WTC11 (cell line): ENCODE measurements at regions of chr11 and their contacts with region 1.

Region 1: GRCh38 chr11:6377902-6378639 is 12.2 kb upstream of the SMPD1 start:
- DNase-seq: no peak
- ATAC-seq: no peak
- H3K4me3 Mint-ChIP-seq: no peak overlapping the region
- H3K27ac Mint-ChIP-seq: no peak overlapping the region
- H3K4me1 Mint-ChIP-seq: peaks cover 13% of the 10 kb centered on the region
- H3K27me3 Mint-ChIP-seq: no peaks in the 10 kb centered on the region
- CTCF ChIP-seq: no peak

Region 2: DNA sequence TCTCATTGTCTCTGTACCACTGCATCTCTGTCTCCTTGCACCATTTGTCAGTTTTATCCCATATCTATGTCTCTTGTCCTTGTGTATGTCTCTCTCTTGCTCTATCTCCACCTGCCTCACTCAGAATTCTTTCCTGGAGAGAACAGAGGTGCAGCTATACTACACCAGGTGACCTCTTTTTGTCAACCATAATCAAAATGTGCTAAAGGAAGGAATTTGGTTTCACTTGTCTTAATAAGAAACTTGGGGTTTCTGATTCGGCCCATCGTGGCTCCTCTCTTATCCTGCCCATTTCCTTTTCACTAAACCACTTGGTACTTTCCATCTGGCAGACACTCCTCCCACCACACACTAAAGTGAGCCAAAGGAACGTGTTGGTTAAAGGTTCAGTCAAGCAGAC is 174.7 kb before region 1 on chr11:
- CTCF ChIA-PET with region 1: no interaction called
- POLR2A ChIA-PET with region 1: no interaction called
- DNase-seq: no peak
- ATAC-seq: no peak
- H3K4me3 Mint-ChIP-seq: no peak overlapping the region
- H3K27ac Mint-ChIP-seq: no peak overlapping the region
- H3K4me1 Mint-ChIP-seq: peaks cover 9% of the 10 kb centered on the region
- H3K27me3 Mint-ChIP-seq: no peaks in the 10 kb centered on the region
- CTCF ChIP-seq: no peak

Region 3: DNA sequence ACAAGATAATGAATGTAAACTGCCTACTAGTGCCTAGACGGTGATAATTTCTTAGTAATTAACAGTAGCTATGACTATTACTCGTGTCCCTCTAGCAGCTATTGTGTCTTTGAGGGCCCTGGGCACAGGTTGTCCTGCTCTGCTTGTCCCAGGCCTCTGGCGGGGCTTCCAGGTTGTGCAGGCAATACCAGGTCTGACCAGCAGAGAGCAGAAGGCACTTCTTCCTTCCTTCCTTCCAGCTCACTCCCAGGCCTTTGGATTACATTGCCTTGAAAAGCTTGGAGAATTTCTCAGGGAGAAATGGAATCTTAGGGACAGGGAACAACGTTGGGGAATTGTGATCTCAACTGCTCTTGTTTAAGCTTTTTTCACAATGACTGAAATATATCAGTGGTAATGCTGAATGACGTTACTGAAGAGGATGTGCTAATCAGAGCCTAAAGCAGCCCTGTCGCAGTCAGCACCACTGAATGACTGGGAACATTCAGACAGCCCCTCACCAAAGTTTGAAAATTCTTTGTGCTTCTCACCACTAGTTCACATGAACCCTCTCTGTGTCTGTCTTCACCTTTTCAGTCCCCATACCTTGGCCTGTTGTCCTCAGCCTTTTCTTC is 126.8 kb before region 1 on chr11:
- CTCF ChIA-PET with region 1: interaction called, 11 read pairs
- POLR2A ChIA-PET with region 1: no interaction called
- DNase-seq: peak; percentile 89
- ATAC-seq: peak; percentile 99
- H3K4me3 Mint-ChIP-seq: no peak overlapping the region
- H3K27ac Mint-ChIP-seq: no peak overlapping the region
- H3K4me1 Mint-ChIP-seq: peaks cover 8% of the 10 kb centered on the region
- H3K27me3 Mint-ChIP-seq: peaks cover 4% of the 10 kb centered on the region
- CTCF ChIP-seq: peak; percentile 80

Region 4: DNA sequence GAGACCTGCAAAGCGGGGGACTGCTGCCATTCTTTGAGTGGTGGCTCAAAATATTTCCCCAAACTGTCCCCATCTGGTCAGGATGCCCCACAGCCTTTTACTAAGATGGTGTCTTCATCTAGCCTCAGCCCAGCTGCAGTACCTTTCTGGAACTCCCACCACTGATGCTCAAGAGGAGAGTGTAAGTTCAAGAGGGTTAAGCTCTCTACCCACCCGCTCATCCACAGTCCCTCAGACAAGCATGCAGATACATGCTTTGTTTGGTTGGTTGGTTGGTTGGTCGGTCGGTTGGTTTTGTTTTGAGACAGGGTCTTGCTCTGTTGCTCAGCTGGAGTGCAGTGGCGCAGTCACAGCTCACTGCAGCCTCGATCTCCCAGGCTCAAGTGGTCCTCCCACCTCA is 43.3 kb before region 1 on chr11:
- CTCF ChIA-PET with region 1: no interaction called
- POLR2A ChIA-PET with region 1: no interaction called
- DNase-seq: no peak
- ATAC-seq: no peak
- H3K4me3 Mint-ChIP-seq: no peak overlapping the region
- H3K27ac Mint-ChIP-seq: no peak overlapping the region
- H3K4me1 Mint-ChIP-seq: peaks cover 21% of the 10 kb centered on the region
- H3K27me3 Mint-ChIP-seq: no peaks in the 10 kb centered on the region
- CTCF ChIP-seq: no peak

Region 5: DNA sequence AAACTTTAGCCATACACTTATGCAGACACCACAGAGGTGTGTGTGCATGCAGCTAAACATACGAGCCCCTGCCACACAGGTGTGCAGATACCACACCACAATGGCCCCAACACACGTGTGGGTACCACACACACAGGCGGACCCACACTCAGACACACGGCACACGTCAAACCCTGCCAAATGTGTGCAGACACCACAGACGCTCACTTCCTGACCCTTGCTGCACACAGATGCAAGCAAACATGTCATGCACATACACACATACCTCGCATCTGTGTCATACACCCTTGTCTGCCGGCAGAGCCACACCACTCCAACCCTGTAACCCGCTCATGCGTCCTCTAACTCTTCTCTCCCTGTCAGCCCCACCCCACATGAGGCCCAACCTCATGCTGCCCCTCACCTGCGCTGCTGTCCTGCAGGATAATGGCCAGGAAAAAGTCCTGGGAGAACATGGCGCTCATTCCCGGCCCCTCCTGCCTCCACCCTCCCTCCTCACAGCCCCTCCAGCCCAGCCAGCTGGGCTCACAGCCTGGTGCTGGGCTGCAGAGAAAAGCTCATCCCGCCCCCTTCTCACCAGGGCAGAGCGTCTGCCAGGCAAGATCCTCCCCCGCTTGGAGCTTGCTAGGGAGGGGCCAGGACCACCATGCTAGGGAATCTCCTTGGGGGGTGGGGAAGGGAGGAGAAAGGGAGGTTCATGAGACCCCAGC is 26.4 kb after region 1 on chr11:
- CTCF ChIA-PET with region 1: interaction called, 23 read pairs
- POLR2A ChIA-PET with region 1: interaction called, 6 read pairs
- DNase-seq: no peak
- ATAC-seq: peak; percentile 35
- H3K4me3 Mint-ChIP-seq: no peak overlapping the region
- H3K27ac Mint-ChIP-seq: no peak overlapping the region
- H3K4me1 Mint-ChIP-seq: peaks cover 18% of the 10 kb centered on the region
- H3K27me3 Mint-ChIP-seq: no peaks in the 10 kb centered on the region
- CTCF ChIP-seq: no peak

Region 6: GRCh38 chr11:6443269-6444003 is 65.4 kb after region 1 on chr11:
- CTCF ChIA-PET with region 1: interaction called, 342 read pairs
- POLR2A ChIA-PET with region 1: interaction called, 3 read pairs
- DNase-seq: peak; percentile 68
- ATAC-seq: peak; percentile 90
- H3K4me3 Mint-ChIP-seq: no peak overlapping the region
- H3K27ac Mint-ChIP-seq: no peak overlapping the region
- H3K4me1 Mint-ChIP-seq: no peaks in the 10 kb centered on the region
- H3K27me3 Mint-ChIP-seq: no peaks in the 10 kb centered on the region
- CTCF ChIP-seq: peak; percentile 80

Region 7: DNA sequence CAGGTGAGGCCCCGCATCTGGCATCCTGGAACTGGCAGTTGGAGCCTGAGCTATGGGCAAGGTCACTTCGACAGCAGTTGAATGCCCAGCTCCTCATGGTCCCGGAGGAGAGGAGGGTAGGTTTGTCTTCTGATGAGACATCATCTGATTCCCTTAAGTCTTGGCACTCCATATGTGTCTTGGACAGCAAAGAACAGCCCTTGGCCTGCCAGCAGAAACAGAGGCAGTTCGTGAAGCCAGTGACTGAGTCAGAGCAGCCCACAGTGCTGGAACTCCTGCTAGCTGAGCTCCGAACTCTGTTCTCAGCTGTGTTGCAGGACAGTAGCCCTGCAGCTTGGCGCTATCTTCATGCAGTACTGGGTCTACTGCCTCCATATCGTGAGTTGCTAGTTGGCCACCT is 120.0 kb after region 1 on chr11:
- CTCF ChIA-PET with region 1: interaction called, 29 read pairs
- POLR2A ChIA-PET with region 1: no interaction called
- DNase-seq: no peak
- ATAC-seq: no peak
- H3K4me3 Mint-ChIP-seq: no peak overlapping the region
- H3K27ac Mint-ChIP-seq: no peak overlapping the region
- H3K4me1 Mint-ChIP-seq: peaks cover 9% of the 10 kb centered on the region
- H3K27me3 Mint-ChIP-seq: no peaks in the 10 kb centered on the region
- CTCF ChIP-seq: no peak

Region 8: DNA sequence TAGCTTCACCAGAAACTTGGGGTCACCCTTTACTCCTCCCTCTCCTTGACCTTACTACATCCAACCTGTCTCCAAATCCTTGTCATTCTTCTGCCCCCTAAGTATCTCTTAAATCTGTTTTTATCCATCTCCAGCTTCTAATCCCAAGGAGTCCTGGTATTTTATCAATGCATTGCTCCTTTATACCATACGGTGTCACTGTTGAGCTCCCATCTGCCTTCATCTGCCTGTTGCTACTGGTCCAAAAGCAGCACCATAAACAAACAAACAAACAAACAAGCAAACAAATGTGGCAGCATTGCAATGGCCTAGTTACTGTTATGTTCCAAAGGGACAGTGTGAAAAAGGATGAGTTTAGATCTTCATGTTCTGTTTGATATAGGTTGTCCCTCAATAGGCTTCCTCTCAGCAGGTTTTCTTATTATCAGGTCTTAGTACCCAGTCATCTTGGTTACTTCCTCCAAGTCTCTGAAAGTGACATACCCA is 153.2 kb after region 1 on chr11:
- CTCF ChIA-PET with region 1: interaction called, 30 read pairs
- POLR2A ChIA-PET with region 1: no interaction called
- DNase-seq: no peak
- ATAC-seq: peak; percentile 90
- H3K4me3 Mint-ChIP-seq: no peak overlapping the region
- H3K27ac Mint-ChIP-seq: no peak overlapping the region
- H3K4me1 Mint-ChIP-seq: no peaks in the 10 kb centered on the region
- H3K27me3 Mint-ChIP-seq: no peaks in the 10 kb centered on the region; the same call in 1 of the 2 replicates
- CTCF ChIP-seq: peak; percentile 19; the same call in 1 of the 2 replicates

Region 9: DNA sequence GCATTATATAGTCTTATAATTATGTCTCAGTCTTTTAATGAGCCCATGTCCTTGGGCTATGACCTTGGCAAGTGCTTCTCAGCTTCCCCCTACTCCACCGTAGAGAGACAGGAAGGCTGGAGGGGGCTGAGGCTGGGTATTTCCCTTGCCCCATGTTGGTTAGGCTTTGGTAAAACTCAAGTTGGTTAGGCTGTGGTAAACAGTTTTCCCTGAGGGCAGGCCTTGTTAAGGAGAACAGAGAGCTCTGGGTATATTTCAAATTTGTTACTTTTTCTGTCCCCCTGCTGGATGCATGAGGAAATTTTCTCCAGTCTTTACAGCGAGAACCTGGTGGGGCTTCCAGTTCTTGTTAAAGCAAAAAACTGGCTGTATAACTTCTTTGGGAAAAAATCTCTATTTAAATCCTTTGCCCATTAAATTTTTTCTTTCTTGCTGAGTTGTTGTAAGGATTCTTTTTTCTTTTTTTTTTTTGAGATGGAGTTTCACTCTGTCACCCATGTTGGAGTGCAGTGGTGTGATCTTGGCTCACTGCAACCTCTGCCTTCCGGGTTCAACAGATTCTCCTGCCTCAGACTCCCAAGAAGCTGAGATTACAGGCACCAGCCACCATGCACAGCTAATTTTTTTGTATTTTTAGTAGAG is 289.8 kb after region 1 on chr11:
- CTCF ChIA-PET with region 1: interaction called, 16 read pairs
- POLR2A ChIA-PET with region 1: no interaction called
- DNase-seq: no peak
- ATAC-seq: peak; percentile 96
- H3K4me3 Mint-ChIP-seq: no peak overlapping the region
- H3K27ac Mint-ChIP-seq: no peak overlapping the region
- H3K4me1 Mint-ChIP-seq: no peaks in the 10 kb centered on the region
- H3K27me3 Mint-ChIP-seq: peaks cover 2% of the 10 kb centered on the region; the same call in 1 of the 2 replicates
- CTCF ChIP-seq: peak; percentile 64

Region 10: GRCh38 chr11:6719576-6719975 is 341.5 kb after region 1 on chr11:
- CTCF ChIA-PET with region 1: no interaction called
- POLR2A ChIA-PET with region 1: no interaction called
- DNase-seq: no peak
- ATAC-seq: no peak
- H3K4me3 Mint-ChIP-seq: no peak overlapping the region
- H3K27ac Mint-ChIP-seq: no peak overlapping the region
- H3K4me1 Mint-ChIP-seq: no peaks in the 10 kb centered on the region
- H3K27me3 Mint-ChIP-seq: peaks cover 47% of the 10 kb centered on the region
- CTCF ChIP-seq: no peak